ENCODE measurements at regions of chr16 and their contacts with region 1.

Region 1: DNA sequence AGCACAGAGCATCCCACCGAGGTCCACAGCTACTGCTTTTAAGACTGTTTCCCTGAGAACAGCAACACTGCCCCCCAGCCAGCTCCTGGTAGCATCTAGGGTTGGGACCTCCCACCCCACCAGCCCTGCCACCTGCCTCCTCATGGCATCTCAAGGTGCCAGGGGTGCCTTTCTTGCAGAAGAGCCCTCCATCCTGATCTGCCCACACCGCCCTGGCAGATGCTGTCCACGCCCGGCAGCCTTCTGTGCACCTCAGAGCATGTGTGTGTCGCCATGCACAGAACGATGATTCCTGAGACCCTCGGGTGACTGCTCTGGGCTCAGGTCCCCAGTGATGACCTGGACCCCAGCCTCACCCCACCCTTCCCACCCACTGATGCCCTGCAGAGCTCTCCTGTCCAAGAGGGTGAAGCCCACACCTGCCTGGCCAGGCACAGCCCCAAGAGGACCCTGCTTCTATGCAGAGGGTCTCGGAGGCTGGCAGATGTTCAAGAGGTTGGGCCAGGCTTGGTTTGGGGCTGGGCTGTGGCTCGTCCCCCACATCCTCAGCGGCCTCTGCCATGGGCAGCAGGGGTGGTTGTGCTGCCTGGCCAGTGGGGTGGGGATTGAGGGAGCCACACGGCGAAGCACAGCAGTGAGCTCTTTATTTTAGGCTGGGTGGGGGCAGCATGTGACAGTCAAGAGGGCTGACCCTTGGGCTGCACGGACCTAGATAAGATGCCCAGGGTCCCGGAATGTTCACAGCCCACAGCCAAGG is 5.2 kb upstream of the SPATA2L start:
- DNase-seq: no peak
- H3K4me3 Mint-ChIP-seq: no peak overlapping the region
- H3K27ac Mint-ChIP-seq: no peak overlapping the region
- H3K4me1 Mint-ChIP-seq: peaks cover 14% of the 10 kb centered on the region
- H3K27me3 Mint-ChIP-seq: no peaks in the 10 kb centered on the region

Region 2: DNA sequence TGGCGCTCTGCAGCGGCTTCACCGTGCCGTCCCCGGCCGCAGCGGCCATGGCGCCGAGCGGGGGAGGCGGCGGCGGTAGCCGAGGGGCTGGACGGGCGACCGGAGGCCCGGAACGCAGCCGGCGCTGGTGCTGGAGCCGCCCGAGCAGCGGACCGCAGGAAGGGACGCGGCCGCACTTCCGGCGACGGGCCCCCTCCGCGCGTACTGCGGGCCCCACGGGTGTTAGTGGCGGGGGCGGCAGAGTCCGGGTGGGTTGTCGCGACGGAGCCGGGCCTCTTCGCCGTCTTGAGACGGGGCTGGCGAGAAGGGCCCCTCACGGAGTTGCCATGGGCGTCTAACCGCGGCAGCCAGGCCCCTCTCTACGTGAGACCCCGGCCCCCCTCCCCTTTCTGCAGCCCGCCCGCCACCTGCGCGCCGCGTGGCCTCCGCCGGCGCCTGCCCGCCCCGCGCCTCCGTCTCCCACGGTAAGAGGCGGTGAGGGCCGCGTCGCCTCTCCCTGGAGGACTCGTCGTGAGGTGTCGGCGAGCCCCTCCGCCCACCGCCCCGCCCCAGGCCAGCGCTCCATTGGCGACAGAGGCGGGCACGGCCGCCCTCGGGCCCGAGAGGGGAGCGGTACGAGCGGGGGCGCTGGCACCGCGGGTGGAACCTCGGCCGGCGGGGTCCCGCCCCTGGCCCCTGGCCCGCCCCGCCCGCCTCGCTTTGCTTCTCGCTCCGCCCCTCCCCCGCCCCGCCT is 14.3 kb after region 1 on chr16 and contains the starts of genes VPS9D1 and ZNF276:
- CTCF ChIA-PET with region 1: interaction called, 22 read pairs
- POLR2A ChIA-PET with region 1: interaction called, 49 read pairs
- DNase-seq: peak; percentile 84
- H3K4me3 Mint-ChIP-seq: peak within 1 kb of the TSS; percentile 96
- H3K27ac Mint-ChIP-seq: peak within 1 kb of the TSS; percentile 100
- H3K4me1 Mint-ChIP-seq: peaks cover 40% of the 10 kb centered on the region
- H3K27me3 Mint-ChIP-seq: no peaks in the 10 kb centered on the region
- total RNA-seq, gene VPS9D1: 7.0 to 7.8 TPM
- total RNA-seq, gene ZNF276: 50.4 to 56.5 TPM

Region 3: GRCh38 chr16:89737341-89738071 is 30.8 kb after region 1 on chr16:
- CTCF ChIA-PET with region 1: interaction called, 32 read pairs
- POLR2A ChIA-PET with region 1: interaction called, 11 read pairs
- DNase-seq: peak; percentile 70
- H3K4me3 Mint-ChIP-seq: peak overlapping the region; percentile 32
- H3K27ac Mint-ChIP-seq: peak overlapping the region; percentile 78
- H3K4me1 Mint-ChIP-seq: peaks cover 30% of the 10 kb centered on the region
- H3K27me3 Mint-ChIP-seq: no peaks in the 10 kb centered on the region

Region 4: DNA sequence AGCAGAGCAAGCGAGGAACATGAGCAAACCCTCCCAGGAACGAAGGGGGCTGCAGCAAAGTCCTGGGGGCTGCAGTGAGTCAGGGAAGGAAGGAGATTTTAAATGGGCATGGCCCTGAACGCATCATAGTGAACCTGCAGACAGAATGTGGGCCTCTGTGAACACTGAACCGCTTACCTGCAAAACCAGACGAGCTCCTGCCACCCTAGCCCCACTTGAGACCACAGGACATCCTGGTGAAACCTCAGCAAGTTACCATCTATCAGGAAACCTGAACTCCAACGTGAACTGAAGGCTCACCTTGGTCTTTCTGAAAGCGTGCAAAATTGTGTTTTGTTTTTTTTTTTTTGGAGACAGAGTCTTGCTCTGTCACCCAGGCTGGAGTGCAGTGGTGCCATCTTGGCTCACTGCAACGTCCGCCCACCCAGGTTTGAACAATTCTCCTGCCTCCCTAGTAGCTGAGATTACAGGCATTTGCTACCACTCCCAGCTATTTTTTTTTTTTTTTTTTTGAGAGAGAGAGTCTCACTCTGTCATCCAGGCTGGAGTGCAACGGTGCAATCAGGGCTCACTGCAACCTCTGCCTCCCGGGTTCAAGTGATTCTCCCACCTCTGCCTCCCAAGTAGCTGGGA is 79.0 kb after region 1 on chr16:
- CTCF ChIA-PET with region 1: interaction called, 57 read pairs
- POLR2A ChIA-PET with region 1: interaction called, 5 read pairs
- DNase-seq: peak; percentile 52
- H3K4me3 Mint-ChIP-seq: no peak overlapping the region
- H3K27ac Mint-ChIP-seq: peak overlapping the region; percentile 69
- H3K4me1 Mint-ChIP-seq: peaks cover 28% of the 10 kb centered on the region
- H3K27me3 Mint-ChIP-seq: no peaks in the 10 kb centered on the region

Region 5: GRCh38 chr16:89795676-89796075 is 89.0 kb after region 1 on chr16:
- CTCF ChIA-PET with region 1: interaction called, 57 read pairs
- POLR2A ChIA-PET with region 1: interaction called, 8 read pairs
- DNase-seq: no peak
- H3K4me3 Mint-ChIP-seq: no peak overlapping the region
- H3K27ac Mint-ChIP-seq: no peak overlapping the region
- H3K4me1 Mint-ChIP-seq: peaks cover 4% of the 10 kb centered on the region
- H3K27me3 Mint-ChIP-seq: no peaks in the 10 kb centered on the region

Region 6: DNA sequence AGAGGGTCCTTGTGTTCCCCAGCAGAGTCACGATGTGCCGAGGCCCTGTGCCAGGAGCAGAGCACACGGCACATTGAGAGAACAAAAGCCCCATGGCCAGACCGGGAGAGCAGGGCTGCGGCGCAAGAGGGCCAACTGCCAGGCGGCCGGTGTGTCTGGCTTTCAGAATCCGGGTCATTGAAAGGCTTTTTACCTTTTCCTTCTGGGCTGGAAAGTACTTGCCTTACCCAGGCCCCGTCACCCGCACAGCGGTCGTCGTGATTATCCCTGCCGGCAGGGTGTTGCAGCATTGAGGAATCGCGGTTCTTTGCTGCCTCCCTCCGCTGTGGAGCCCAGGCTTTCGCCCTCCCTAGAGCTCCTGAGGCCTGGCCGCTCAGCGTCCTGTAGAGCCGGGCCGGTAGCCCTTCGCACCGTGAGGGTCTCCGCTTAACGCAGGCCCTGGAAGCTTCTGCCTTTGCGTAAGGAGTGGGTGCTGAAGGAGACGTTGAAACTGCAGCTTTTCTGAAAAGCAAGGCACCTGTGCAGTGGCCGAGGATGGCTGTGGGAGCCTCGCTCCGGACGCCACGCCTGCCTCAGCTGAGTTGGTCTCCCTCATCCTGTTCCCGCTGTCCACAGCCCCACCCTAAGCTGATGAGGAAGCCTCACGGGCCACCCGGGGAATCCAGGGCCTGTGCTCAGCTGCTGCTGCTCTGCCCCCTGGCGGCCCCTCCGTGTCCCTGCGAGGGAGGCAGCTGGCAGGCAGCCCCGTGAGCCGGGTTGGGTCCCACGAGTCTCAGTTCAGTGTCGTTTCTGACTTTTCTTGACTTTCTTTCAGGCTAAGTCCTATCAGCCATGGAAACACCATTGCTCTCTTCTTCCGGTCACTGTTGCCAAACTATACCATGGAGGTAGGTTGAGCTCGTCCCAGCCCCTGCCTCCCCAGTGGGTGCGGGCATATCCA is 203.4 kb after region 1 on chr16:
- CTCF ChIA-PET with region 1: interaction called, 11 read pairs
- POLR2A ChIA-PET with region 1: no interaction called
- DNase-seq: peak; percentile 77
- H3K4me3 Mint-ChIP-seq: no peak overlapping the region
- H3K27ac Mint-ChIP-seq: no peak overlapping the region
- H3K4me1 Mint-ChIP-seq: peaks cover 10% of the 10 kb centered on the region
- H3K27me3 Mint-ChIP-seq: no peaks in the 10 kb centered on the region

Measured in activated CD4-positive, alpha-beta memory T cell treated with anti-CD3 and anti-CD28 coated beads, Interleukin-2, amount 10 ng/mL, durations not matched to agents 7 days and 5 days (primary cell).